ENCODE measurements at regions of chr2 and their contacts with region 1.

Region 1: DNA sequence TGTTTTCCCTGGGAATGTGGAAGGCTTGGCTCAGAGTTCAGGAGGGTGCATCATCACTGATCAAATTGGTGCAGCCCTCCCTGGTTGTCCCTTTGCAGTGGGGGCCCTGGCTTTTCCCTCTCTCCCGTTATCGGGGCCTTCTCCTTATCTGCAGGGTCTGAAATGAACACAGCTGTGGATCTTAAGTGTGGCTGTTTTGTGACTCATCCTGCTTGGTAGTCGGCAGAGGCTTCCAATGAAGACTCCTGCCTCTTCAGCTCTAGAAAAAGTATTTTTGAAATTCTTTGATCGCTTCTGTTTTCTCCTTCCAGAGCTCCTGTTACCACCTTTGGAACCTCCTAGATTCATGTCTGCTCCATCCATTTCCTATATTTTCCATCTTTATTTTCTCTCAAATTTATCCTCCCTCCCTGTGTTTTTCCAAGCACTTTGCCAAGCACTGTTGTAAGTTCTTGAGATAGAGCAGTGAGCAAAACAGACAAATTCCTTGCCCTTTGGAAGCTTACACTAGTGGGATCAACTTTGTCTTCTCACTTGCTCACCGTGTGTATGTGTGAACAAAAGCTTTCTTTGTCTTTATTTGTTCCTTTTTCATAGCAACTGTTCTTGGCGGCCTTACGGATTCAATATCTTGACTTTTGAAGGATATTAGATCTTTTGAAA is 45.7 kb downstream of the RALB start:
- DNase-seq: no peak
- ATAC-seq: no peak
- H3K4me3 ChIP-seq: no peak overlapping the region
- H3K27ac ChIP-seq: no peak overlapping the region
- H3K4me1 ChIP-seq: no peaks in the 10 kb centered on the region
- H3K27me3 ChIP-seq: no peaks in the 10 kb centered on the region
- CTCF ChIP-seq: no peak

Region 2: DNA sequence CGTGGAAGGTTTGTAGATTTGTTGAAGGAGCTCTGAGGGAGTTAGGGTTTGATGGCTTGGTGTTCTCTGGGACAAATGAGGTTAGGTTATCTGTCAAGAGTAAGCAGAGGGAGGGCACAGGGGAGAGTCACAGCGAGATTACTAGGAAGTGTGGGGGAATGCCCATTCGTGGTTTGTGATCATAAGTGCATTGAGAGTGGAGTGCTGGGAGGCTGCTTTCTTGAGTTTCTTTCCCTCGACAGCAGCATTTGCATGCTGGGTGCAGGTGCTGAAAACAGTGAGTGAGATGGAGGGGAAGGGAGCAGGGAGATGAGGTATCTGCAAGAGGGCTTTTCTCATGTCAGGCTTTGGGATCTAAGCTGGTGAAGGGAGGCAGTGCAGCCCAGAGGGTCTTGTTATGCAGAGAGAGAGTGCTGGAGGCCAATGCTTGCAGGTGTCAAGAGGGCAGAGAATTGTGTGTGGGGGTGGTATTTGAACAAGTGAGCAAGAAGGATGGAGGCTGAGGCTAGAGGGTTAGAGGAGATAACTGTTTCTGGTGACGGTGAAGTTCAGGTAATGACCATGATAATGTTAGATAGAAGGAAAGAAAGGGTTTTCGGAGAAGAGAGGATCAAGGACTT is 36.8 kb before region 1 on chr2:
- intact Hi-C with region 1: loop called in 1 of 2 experiments (anchors 5 kb)
- DNase-seq: no peak
- ATAC-seq: no peak
- H3K4me3 ChIP-seq: no peak overlapping the region
- H3K27ac ChIP-seq: no peak overlapping the region
- H3K4me1 ChIP-seq: no peaks in the 10 kb centered on the region
- H3K27me3 ChIP-seq: no peaks in the 10 kb centered on the region
- CTCF ChIP-seq: no peak

Measured in psoas muscle (tissue), 8 donors.